ENCODE measurements at regions of chr1 and their contacts with region 1.

Region 1: DNA sequence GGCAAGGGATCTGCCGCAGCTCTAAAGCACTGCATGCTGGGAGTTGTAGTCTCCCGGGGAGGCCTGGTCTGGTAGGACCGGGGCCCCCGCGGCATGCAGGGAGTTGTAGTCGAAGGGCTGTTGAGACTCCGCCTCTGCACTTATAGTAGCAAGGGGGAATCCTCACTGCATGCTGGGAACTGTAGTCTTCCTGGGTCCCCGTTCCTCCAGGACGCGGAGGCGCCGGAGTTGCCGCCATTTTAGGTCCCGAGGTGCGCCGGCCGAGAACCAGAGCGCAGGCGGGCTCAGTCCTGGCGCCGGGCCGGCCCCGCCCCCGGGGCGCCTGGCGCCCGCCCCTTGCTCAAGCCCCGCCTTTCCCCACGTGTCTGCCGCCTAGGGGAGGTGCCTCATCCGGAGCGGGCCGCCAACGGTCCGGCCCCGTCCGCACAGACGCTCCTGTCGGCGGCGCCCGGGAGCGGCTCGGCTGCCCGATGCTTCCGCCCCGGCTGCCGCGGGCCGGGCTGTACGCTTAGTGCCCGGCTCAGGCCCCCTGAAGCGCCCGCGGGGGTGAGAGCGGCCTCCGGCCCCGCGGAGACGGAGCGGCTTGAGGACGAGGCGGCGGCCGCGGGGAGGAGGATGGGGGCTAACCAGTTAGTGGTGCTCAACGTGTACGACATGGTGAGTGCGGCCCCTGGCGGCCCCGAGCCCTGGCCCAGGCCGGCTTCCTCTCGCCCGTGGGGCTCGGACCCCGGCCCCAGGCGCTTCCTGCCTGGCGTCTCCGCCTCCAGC is at the start of gene DESI2:
- H3K4me3 Mint-ChIP-seq: peak within 1 kb of the TSS; percentile 75
- H3K27ac Mint-ChIP-seq: no peak within 1 kb of the TSS
- H3K4me1 Mint-ChIP-seq: peaks cover 20% of the 10 kb centered on the region
- H3K27me3 Mint-ChIP-seq: peaks cover 4% of the 10 kb centered on the region

Region 2: GRCh38 chr1:244451951-244452795 is 200.7 kb before region 1 on chr1:
- intact Hi-C with region 1: loop called (anchors 1 kb)
- H3K4me3 Mint-ChIP-seq: peak overlapping the region; percentile 95
- H3K27ac Mint-ChIP-seq: peak overlapping the region; percentile 94
- H3K4me1 Mint-ChIP-seq: peaks cover 29% of the 10 kb centered on the region
- H3K27me3 Mint-ChIP-seq: no peaks in the 10 kb centered on the region

Region 3: DNA sequence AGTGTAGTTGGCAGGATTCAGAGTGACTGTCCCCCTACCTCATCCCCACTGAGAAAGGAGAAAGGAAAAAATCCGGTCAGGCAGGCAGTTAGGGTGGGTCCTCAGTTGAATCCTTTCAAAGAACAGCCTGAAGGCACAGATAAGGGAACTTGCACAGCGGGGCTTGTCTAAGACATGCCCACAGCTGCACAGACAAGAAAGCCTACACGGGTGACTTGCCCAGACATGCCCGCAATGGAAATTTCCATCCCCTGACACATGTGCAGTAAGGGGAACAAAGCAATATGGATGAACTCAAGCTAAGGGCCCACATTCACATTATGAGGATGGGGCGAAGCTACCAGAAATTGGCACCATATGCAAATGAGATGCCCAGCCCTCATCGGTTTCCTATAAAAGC is 82.5 kb after region 1 on chr1:
- intact Hi-C with region 1: no loop called
- H3K4me3 Mint-ChIP-seq: no peak overlapping the region
- H3K27ac Mint-ChIP-seq: no peak overlapping the region
- H3K4me1 Mint-ChIP-seq: no peaks in the 10 kb centered on the region
- H3K27me3 Mint-ChIP-seq: peaks cover 27% of the 10 kb centered on the region

Region 4: DNA sequence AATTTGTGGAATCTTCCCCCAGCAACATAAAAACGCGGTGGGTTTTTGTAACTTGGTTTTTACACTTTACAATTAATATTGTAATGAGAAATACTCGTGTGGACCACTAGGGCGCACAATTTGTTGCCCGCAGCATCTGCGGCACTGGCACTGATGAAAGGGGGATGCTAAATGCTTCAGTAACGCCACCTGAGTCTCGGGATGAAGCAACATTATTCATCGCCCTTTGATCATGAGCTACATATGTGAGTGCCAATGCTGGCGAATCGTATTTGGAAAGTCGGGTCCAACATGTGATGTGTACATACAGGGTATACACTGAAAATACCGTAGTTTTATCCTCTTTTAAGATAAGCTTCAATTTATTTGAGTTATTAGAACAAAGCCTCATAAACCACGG is 148.4 kb after region 1 on chr1:
- intact Hi-C with region 1: loop called (anchors 5 kb)
- H3K4me3 Mint-ChIP-seq: no peak overlapping the region
- H3K27ac Mint-ChIP-seq: no peak overlapping the region
- H3K4me1 Mint-ChIP-seq: peaks cover 5% of the 10 kb centered on the region
- H3K27me3 Mint-ChIP-seq: peaks cover 15% of the 10 kb centered on the region

Region 5: GRCh38 chr1:244835276-244836134 is 182.6 kb after region 1 on chr1 and contains the start of gene COX20:
- intact Hi-C with region 1: loop called (anchors 10 kb)
- H3K4me3 Mint-ChIP-seq: peak within 1 kb of the TSS; percentile 95
- H3K27ac Mint-ChIP-seq: peak within 1 kb of the TSS; percentile 99
- H3K4me1 Mint-ChIP-seq: peaks cover 33% of the 10 kb centered on the region
- H3K27me3 Mint-ChIP-seq: no peaks in the 10 kb centered on the region

Region 6: GRCh38 chr1:244970661-244971551 is 318.0 kb after region 1 on chr1:
- intact Hi-C with region 1: loop called (anchors 5 kb)
- H3K4me3 Mint-ChIP-seq: peak overlapping the region; percentile 87
- H3K27ac Mint-ChIP-seq: peak overlapping the region; percentile 99
- H3K4me1 Mint-ChIP-seq: peaks cover 17% of the 10 kb centered on the region
- H3K27me3 Mint-ChIP-seq: no peaks in the 10 kb centered on the region